Calu3 (cell line): ENCODE measurements at regions of chr6 and their contacts with region 1.

Region 1: DNA sequence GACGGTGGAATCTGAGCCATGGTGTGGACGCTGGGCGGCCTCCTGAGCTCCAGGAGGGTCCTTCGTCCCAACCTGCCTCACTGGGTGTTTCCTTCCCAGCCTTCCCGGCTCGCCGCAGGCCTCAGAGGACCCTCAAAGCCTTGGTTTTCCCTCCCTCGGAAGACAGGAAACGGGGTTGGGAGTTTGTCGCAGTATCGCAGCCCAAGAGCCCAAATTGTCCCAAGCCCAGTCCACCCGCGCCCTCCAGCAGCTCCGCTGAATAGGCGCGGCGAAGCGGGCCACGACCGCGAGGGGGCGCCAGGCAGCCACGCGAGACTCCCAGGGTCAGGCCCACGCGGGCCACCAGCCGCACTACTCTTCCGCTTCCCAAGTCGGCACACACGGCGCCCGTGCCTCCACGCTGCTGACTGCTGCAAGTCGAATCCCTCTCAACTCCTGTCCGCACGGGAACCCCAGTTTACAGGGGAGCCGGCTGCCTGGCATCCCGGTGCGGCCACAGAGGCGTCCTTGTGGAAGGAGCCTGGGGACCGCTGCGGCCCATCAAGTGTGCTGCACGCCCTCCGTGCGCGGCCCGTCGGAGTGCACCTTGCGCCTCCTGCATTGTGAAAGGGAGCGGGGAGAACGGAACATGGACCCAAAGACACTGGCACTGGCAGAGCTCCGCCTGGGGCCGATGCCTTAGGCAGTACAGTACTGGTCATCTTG is 40.4 kb upstream of the HMGA1 start:
- DNase-seq: peak; percentile 96
- H3K4me3 Mint-ChIP-seq: peak overlapping the region; percentile 75
- H3K27ac Mint-ChIP-seq: no peak overlapping the region
- H3K4me1 Mint-ChIP-seq: peaks cover 18% of the 10 kb centered on the region
- H3K27me3 Mint-ChIP-seq: peaks cover 15% of the 10 kb centered on the region
- CTCF ChIP-seq: peak; percentile 99

Region 2: GRCh38 chr6:33732826-33733708 is 463.2 kb before region 1 on chr6:
- CTCF ChIA-PET with region 1: no interaction called
- intact Hi-C with region 1: no loop called
- DNase-seq: no peak
- H3K4me3 Mint-ChIP-seq: no peak overlapping the region
- H3K27ac Mint-ChIP-seq: peak overlapping the region; percentile 50
- H3K4me1 Mint-ChIP-seq: peaks cover 37% of the 10 kb centered on the region
- H3K27me3 Mint-ChIP-seq: no peaks in the 10 kb centered on the region
- CTCF ChIP-seq: no peak

Region 3: DNA sequence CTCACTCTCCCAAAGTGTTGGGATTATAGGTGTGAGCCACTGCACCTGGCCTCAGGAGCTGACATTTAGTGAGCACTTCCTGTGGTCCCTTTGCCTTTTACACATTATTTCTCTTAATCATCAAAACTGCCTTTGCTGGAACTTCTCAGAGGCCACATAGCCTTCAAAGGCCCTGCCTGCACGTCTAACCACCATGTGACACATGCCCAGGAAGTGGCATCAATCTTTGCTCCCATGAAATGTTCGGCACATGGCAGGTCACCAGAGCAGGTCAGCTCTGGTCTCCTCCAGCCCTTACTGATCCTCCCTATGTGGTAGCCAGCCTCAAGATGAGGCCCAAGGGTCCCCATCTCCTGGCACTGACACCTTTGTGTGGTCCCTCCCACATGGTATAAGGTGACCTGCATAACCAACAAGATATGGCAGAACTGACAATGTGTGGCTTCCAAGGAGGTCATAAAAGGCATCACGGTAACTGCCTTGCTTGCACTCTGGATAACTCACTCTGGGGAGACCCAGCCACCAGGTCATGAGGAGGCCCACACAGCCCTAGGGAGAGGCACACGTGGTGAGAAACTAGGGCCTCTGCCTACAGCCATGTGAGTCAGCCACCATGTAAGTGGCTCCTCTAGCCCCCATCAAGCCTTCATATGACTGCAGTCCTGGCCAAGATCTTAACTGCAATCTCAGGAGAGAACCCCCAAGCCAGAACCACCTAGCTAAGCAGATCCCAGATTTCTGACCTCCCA is 11.6 kb after region 1 on chr6:
- CTCF ChIA-PET with region 1: interaction called, 10 read pairs
- intact Hi-C with region 1: no loop called
- DNase-seq: no peak
- H3K4me3 Mint-ChIP-seq: no peak overlapping the region
- H3K27ac Mint-ChIP-seq: no peak overlapping the region
- H3K4me1 Mint-ChIP-seq: no peaks in the 10 kb centered on the region
- H3K27me3 Mint-ChIP-seq: no peaks in the 10 kb centered on the region
- CTCF ChIP-seq: no peak

Region 4: DNA sequence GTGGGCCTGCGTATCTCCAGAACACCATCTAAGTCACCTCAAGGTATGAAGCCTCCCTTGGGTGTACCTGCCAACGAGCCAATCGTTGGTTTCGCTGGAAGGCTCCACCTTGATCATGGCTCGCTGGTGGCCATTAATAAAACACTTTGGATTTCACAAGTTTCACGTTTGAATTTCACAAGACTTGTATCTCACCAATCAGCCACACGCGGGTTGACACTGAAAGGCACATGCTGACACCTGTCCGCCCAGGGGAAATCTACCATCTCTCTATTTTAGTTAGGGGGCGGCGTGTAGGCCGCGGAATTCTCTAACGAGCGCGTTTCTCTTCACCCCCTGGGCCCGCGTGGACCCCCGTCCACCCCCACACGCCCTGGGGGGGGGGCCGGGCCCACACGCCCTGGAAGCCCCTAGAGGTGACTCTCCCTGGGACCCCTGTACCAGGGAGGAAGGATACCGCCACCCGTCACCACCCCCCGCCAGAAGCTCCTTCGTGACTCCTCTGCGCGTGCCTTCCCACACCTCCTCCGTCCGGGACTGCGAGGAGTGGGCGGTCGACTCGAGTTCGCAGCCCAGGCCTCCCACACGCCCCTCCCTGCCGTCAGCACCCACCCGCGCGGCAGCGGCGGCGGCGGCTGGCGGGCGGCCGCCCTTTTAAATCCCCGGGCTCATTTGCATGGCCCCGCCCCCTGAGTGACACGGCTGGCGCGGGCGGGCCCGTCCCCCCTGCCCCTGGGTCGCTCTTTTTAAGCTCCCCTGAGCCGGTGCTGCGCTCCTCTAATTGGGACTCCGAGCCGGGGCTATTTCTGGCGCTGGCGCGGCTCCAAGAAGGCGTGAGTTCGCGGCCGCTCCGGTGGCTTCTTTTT is 40.1 kb after region 1 on chr6 and contains the start of gene HMGA1:
- CTCF ChIA-PET with region 1: interaction called, 20 read pairs
- intact Hi-C with region 1: no loop called
- DNase-seq: peak; percentile 98
- H3K4me3 Mint-ChIP-seq: peak within 1 kb of the TSS; percentile 81
- H3K27ac Mint-ChIP-seq: peak within 1 kb of the TSS; percentile 97
- H3K4me1 Mint-ChIP-seq: peaks cover 53% of the 10 kb centered on the region
- H3K27me3 Mint-ChIP-seq: no peaks in the 10 kb centered on the region
- CTCF ChIP-seq: no peak
- total RNA-seq, gene HMGA1: 1,138 and 1,378 TPM in 2 replicates

Region 5: GRCh38 chr6:34248727-34249551 is 52.7 kb after region 1 on chr6 and contains the start of gene SMIM29:
- CTCF ChIA-PET with region 1: interaction called, 28 read pairs
- intact Hi-C with region 1: loop called (anchors 2 kb)
- DNase-seq: peak; percentile 100
- H3K4me3 Mint-ChIP-seq: peak within 1 kb of the TSS; percentile 81
- H3K27ac Mint-ChIP-seq: peak within 1 kb of the TSS; percentile 97
- H3K4me1 Mint-ChIP-seq: peaks cover 55% of the 10 kb centered on the region
- H3K27me3 Mint-ChIP-seq: no peaks in the 10 kb centered on the region
- CTCF ChIP-seq: peak; percentile 99
- total RNA-seq, gene SMIM29: 59.2 and 68.6 TPM in 2 replicates

Region 6: GRCh38 chr6:34373511-34373910 is 177.2 kb after region 1 on chr6:
- CTCF ChIA-PET with region 1: interaction called, 10 read pairs
- intact Hi-C with region 1: no loop called
- DNase-seq: no peak
- H3K4me3 Mint-ChIP-seq: no peak overlapping the region
- H3K27ac Mint-ChIP-seq: no peak overlapping the region
- H3K4me1 Mint-ChIP-seq: peaks cover 17% of the 10 kb centered on the region
- H3K27me3 Mint-ChIP-seq: no peaks in the 10 kb centered on the region
- CTCF ChIP-seq: no peak

Region 7: DNA sequence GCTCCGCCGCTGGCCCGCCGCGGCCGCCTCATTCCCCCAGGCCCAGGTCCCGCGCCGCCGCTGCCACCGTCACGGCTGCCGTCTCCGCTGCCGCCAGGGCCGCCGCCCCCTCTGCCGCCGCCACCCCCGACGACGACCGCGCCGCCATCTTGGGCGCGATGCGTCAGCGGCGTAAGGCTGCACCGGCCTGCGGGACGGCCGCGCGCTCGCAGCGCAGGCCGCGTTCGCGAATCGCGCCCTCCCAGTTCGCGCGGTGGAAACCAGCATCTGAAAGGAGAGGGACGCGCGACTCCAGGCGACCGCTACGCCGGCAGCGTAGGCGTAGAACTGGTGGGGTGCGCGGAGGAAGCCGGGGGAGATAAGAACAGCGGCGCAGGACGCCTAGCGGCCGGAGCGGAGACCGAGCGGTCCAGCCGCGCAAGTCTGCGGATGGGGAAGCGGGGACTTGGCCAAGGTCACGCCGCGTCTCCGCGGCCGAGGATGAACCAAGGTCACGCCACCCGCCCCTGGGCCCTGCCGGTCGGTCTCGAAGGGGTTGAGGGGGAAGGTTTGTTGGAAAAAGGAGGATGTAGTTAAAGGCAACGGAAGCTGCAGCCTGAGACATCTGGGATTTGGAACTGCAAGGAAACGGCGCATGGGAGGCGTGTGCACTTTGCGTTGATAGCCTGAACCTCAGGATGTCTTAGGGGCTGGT is 196.4 kb after region 1 on chr6 and contains the start of gene NUDT3:
- CTCF ChIA-PET with region 1: no interaction called
- intact Hi-C with region 1: loop called (anchors 5 kb)
- DNase-seq: peak; percentile 98
- H3K4me3 Mint-ChIP-seq: no peak within 1 kb of the TSS
- H3K27ac Mint-ChIP-seq: peak within 1 kb of the TSS; percentile 5
- H3K4me1 Mint-ChIP-seq: peaks cover 9% of the 10 kb centered on the region
- H3K27me3 Mint-ChIP-seq: no peaks in the 10 kb centered on the region
- CTCF ChIP-seq: peak; percentile 94
- total RNA-seq, gene NUDT3: 43.9 and 48.4 TPM in 2 replicates